Activated T-helper 1 cell treated with anti-CD3 and anti-CD28 coated beads, Interleukin-12 subunit alpha, Interleukin-12 subunit beta, Interleukin-2, Interleukin-4 antibody, amounts not matched to agents 30 ng/mL and 10 ng/mL and 1 ng/mL, durations not matched to agents 14 hours and 24 hours and 36 hours (primary cell): ENCODE measurements at regions of chr17 and their contacts with region 1.

Region 1: DNA sequence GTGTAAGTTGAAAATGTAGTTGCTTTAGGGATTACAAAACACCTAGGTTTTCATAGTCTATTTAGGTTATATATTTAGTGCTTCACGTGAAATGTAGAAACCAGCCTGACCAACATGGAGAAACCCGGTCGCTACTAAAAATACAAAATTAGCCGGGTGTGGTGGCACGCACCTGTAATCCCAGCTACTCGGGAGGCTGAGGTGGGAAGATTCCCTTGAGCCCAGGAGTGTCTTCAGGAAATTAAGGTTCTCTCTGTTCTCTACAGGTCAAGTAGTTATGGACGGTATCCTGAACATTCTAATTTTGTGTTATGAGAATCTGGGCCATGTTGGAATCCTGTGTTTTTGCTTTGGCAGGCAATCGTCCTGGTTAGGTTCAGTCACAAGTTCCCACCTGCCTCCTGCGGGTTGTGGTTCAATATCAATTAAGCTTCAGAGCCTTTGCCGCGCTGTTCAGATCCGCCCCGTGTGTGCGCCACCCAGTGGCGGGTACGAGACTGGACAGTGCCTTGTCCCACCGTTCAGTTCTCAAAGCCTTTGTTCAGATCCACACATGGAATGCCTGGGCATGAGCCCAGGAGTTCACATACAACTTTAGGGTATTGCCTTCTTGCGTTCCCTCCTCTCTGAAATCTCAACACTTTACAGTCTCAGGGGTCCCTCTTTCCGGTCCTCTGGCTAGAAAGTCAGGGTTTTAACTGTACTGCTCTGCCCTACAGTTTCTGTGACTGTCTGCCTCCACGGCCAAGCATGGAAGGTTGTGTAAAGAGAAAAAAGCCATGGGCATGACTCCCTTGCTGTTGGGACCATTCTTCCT is 41.7 kb downstream of the HEATR6 start:
- DNase-seq: peak; percentile 53
- H3K4me3 Mint-ChIP-seq: peak overlapping the region; percentile 25
- H3K27ac Mint-ChIP-seq: no peak overlapping the region
- H3K4me1 Mint-ChIP-seq: peaks cover 6% of the 10 kb centered on the region
- H3K27me3 Mint-ChIP-seq: peaks cover 15% of the 10 kb centered on the region

Region 2: DNA sequence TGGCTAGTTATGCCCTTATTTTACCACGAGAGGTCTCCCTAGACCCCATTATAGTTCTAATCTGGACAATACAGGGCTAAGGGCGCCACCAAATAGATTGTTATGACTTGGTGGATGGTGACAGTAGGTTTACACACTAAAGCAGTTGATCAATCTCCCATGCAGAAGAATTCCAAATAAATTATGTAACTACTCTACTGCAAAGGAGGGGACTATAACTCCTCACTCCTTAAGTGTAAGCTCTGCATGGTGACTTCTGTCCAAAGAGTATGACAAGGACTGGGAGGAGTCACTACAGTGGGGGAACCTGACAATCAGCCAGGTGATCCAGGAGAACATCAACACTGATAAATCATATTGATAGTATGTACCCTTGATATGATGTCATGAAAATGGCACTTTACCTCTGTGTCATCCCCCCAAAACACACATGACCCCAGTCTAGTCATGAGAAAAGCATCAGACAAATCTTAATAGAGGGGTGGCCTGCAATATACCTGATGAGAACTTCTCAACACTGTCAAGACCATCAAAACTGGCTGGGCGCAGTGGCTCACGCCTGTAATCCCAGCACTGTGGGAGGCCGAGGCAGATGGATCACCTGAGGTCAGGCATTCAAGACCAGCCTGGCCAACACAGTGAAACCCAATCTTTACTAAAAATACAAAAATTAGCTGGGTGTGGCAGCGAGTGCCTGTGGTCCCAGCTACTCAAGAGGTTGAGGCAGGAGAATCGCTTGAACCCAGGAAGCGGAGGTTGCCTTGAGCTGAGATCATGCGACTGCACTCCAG is 725.7 kb before region 1 on chr17:
- intact Hi-C with region 1: loop called (anchors 5 kb)
- DNase-seq: peak; percentile 40
- H3K4me3 Mint-ChIP-seq: no peak overlapping the region
- H3K27ac Mint-ChIP-seq: no peak overlapping the region
- H3K4me1 Mint-ChIP-seq: peaks cover 8% of the 10 kb centered on the region
- H3K27me3 Mint-ChIP-seq: no peaks in the 10 kb centered on the region

Region 3: GRCh38 chr17:59746849-59747445 is 290.1 kb before region 1 on chr17:
- intact Hi-C with region 1: loop called (anchors 5 kb)
- DNase-seq: no peak
- H3K4me3 Mint-ChIP-seq: no peak overlapping the region
- H3K27ac Mint-ChIP-seq: no peak overlapping the region
- H3K4me1 Mint-ChIP-seq: peaks cover 14% of the 10 kb centered on the region
- H3K27me3 Mint-ChIP-seq: no peaks in the 10 kb centered on the region

Region 4: DNA sequence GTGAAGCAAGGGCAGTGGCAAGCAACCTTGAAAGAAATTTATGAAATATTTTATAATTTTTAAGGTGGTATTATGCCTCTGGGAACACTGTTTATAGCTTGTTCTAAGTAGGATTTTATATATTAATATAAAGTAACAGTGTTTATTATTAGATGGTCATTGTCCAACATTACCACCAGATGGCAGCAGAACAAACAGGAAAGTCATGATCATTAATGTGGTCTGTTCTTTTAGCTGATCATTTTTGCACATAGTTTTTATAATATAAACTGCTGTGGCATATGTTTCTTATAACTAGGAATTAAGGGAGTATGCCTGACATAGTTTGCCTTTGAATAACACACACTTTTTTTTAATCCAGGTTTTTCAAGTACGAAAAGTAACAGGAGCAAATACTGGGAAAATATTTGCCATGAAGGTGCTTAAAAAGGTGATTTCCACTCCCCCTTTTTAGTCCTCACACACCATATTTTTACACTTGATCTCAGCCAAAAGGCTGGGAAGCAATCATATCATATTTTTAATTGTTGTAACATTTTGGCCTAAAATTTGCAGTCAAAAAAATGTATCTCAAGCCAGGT is 122.6 kb before region 1 on chr17:
- intact Hi-C with region 1: loop called (anchors 5 kb)
- DNase-seq: no peak
- H3K4me3 Mint-ChIP-seq: no peak overlapping the region
- H3K27ac Mint-ChIP-seq: no peak overlapping the region
- H3K4me1 Mint-ChIP-seq: peaks cover 6% of the 10 kb centered on the region
- H3K27me3 Mint-ChIP-seq: no peaks in the 10 kb centered on the region

Region 5: DNA sequence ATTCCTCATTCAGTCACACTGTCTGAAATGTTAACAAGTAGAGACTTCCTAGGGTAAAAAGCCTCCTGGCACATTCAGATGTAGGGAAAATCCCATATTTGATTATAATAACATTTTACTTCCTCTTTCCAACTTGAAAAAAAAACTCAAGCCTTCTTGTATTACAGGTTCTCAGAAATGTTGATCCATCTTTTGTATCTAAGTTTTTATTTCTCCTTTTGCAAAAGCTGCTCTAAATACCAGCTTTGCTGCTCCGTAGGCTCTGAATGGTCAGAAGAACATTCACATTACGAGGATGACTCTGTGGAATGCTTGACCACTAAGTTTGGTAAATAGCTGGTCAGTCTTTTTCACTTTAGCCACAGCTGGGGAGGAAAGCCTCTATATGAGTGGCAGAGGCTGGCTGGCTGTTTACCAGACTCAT is 54.9 kb after region 1 on chr17:
- intact Hi-C with region 1: no loop called
- DNase-seq: no peak
- H3K4me3 Mint-ChIP-seq: no peak overlapping the region
- H3K27ac Mint-ChIP-seq: no peak overlapping the region
- H3K4me1 Mint-ChIP-seq: no peaks in the 10 kb centered on the region
- H3K27me3 Mint-ChIP-seq: peaks cover 16% of the 10 kb centered on the region

Region 6: GRCh38 chr17:60327122-60327900 is 290.3 kb after region 1 on chr17:
- intact Hi-C with region 1: no loop called
- DNase-seq: no peak
- H3K4me3 Mint-ChIP-seq: no peak overlapping the region
- H3K27ac Mint-ChIP-seq: no peak overlapping the region
- H3K4me1 Mint-ChIP-seq: no peaks in the 10 kb centered on the region
- H3K27me3 Mint-ChIP-seq: no peaks in the 10 kb centered on the region